PC-9 (cell line): ENCODE measurements at regions of chr1 and their contacts with region 1.

Region 1: DNA sequence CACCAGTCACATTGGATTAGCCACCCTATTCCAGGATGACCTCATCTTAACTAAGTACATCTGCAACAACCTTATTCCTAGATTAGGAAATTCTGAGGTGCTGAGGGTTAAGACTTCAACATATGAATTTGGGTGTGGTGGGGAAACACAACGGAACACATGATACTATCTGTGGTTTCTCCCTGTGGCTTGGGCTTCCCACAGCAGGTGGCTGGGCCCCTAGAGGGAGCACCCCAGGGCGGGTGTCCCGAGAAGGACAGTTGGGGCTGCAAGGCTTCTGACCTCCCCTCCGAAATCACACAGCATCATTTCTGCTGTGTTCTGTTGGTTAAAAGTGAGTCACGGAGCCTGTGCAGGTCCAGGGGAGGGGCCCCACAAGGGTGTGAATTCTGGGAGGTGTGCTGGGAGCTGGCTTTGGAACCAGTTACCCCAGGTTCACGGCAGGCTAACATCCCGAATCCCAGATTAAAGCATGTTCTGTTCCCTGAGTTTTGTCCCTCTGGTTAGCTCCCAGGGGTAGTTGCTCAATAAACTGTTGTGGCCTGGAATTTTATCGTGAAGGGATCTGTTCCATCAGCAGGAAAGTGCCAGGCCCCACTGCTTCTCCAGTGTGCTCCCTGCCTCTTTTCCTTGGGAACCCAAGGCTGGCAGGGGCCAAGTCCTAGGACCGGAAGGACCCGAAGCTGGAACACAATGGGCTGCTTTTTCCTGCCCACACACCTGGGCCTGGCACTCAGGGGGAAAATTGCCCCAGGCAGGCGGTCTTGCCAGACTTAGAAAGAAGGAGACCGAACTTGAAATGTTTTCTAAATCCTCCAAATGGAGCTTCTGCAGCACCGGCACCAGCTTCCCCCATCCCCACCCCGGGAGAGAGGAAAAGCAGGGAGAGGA is 154.0 kb upstream of the WNT4 start:
- DNase-seq: peak; percentile 36 to 72
- H3K4me3 ChIP-seq: no peak overlapping the region
- H3K27ac ChIP-seq: peak overlapping the region; percentile 63
- H3K4me1 ChIP-seq: peaks cover 22% of the 10 kb centered on the region
- H3K27me3 ChIP-seq: no peaks in the 10 kb centered on the region
- CTCF ChIP-seq: no peak

Region 2: DNA sequence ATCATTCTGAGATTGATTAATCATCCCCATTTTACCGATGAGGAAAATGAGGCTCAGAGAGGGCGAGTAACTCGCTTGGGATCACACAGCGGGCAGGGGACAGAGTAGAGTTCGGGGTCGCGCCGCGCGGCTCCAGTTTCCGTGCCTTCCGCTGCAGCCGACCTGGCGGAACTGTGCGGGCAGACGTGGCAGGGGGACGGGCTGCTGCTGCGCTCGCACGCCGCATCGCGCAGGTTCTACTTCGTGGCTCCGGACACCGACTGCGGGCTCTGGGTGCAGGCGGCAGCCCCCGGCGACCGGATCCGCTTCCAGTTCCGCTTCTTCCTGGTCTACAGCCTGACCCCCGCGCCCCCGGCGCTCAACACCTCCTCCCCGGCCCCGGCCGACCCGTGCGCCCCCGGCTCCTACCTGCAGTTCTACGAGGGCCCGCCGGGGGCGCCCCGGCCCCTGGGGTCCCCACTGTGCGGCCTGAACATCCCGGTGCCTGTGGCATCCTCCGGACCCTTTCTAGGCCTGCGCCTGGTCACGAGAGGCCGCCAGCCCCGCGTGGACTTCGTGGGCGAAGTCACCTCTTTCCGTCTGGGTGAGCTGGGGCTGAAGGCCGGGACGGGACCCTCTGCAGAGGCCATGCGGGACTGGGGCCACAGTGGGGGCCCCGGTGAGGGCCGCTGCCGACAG is 482.6 kb before region 1 on chr1:
- CTCF ChIA-PET with region 1: no interaction called
- POLR2A ChIA-PET with region 1: no interaction called
- intact Hi-C with region 1: no loop called
- DNase-seq: no peak
- H3K4me3 ChIP-seq: no peak overlapping the region
- H3K27ac ChIP-seq: no peak overlapping the region
- H3K4me1 ChIP-seq: peaks cover 33% of the 10 kb centered on the region
- H3K27me3 ChIP-seq: no peaks in the 10 kb centered on the region
- CTCF ChIP-seq: no peak; the same call in 1 of the 2 replicates

Region 3: GRCh38 chr1:22052115-22053016 is 244.6 kb before region 1 on chr1 and contains the start of gene CDC42:
- CTCF ChIA-PET with region 1: no interaction called
- POLR2A ChIA-PET with region 1: no interaction called
- intact Hi-C with region 1: no loop called
- DNase-seq: peak; percentile 80 to 97
- H3K4me3 ChIP-seq: peak within 1 kb of the TSS; percentile 90
- H3K27ac ChIP-seq: peak within 1 kb of the TSS; percentile 79
- H3K4me1 ChIP-seq: peaks cover 20% of the 10 kb centered on the region
- H3K27me3 ChIP-seq: no peaks in the 10 kb centered on the region
- CTCF ChIP-seq: no peak
- total RNA-seq, gene CDC42: 119 and 183 TPM in 2 replicates

Region 4: GRCh38 chr1:22500471-22500870 is 203.5 kb after region 1 on chr1:
- CTCF ChIA-PET with region 1: interaction called, 10 read pairs
- POLR2A ChIA-PET with region 1: no interaction called
- intact Hi-C with region 1: no loop called
- DNase-seq: no peak
- H3K4me3 ChIP-seq: no peak overlapping the region
- H3K27ac ChIP-seq: no peak overlapping the region
- H3K4me1 ChIP-seq: no peaks in the 10 kb centered on the region
- H3K27me3 ChIP-seq: no peaks in the 10 kb centered on the region
- CTCF ChIP-seq: no peak